Breast epithelium (tissue), 4 donors: ENCODE measurements at regions of chr4 and their contacts with region 1.

Region 1: DNA sequence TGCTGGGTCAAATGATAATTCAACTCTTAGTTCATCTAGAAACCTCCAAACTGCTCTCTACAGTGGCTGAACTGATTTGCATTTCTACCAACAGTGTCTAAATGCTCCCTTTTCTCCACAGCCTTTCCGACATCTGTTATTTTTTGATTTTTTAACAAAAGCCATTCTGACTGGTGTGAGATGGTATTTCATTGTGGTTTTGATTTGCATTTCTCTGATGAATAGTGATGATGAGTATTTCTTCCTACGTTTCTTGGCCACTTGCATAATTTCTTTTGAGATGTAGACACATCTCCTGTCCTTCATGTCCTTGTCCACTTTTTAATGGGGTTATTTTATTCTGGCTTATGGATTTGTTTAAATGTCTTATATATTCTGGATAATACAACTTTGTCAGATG is 298.2 kb upstream of the ARSJ start:
- DNase-seq: no peak
- H3K4me3 ChIP-seq: no peak overlapping the region
- H3K27ac ChIP-seq: no peak overlapping the region
- H3K4me1 ChIP-seq: no peaks in the 10 kb centered on the region
- H3K27me3 ChIP-seq: no peaks in the 10 kb centered on the region
- CTCF ChIP-seq: no peak
- POLR2A ChIP-seq: no peak

Region 2: GRCh38 chr4:114343015-114343414 is 65.3 kb after region 1 on chr4:
- intact Hi-C with region 1: loop called (anchors 5 kb)
- DNase-seq: no peak
- H3K4me3 ChIP-seq: no peak overlapping the region
- H3K27ac ChIP-seq: no peak overlapping the region
- H3K4me1 ChIP-seq: no peaks in the 10 kb centered on the region
- H3K27me3 ChIP-seq: no peaks in the 10 kb centered on the region
- CTCF ChIP-seq: no peak
- POLR2A ChIP-seq: no peak